Ovary (tissue), 10 donors: ENCODE measurements at regions of chr15 and their contacts with region 1.

Region 1: DNA sequence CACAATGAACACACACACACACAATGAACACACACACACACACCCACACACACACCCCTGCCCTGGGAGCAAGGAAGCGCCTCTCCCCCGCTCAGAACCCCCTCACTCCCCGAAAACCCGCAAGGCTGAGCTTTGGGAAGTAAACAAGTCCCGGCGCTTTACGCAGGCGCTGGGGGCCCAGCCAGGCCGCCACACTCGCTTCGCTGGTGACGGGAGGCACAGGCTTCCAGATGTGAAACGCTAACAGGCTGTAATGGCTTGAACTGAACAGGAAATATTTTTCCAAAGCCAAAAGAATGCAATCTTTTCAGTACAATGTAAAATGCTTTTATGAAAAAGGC is 122.7 kb upstream of the IGF1R start:
- DNase-seq: peak; percentile 57 to 81 (median 67)
- H3K4me3 ChIP-seq: no peak overlapping the region
- H3K27ac ChIP-seq: peak overlapping the region; percentile 49 to 75
- H3K4me1 ChIP-seq: peaks cover 4% of the 10 kb centered on the region
- H3K27me3 ChIP-seq: no peaks in the 10 kb centered on the region
- CTCF ChIP-seq: no peak
- EP300 ChIP-seq: no peak
- POLR2A ChIP-seq: no peak

Region 2: DNA sequence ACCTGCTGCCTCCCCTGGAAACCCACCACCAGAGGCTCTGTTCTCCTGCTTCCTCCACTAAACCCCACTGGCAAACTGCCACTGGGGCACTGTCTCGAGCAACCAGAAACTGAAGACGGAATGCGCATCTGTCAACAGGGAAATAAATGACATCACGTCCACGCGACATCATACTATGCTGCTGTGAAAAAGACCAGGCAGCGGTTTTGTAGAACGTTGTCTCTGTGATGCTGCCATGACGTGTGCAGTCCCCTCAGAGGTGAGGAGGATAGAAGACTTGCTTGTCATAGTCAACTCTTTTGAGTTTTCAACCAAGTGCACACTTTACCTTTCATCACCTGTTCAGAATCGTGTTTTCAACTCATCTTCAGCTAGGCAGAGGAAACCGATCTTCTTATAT is 80.3 kb before region 1 on chr15:
- intact Hi-C with region 1: no loop called
- DNase-seq: no peak
- H3K4me3 ChIP-seq: no peak overlapping the region
- H3K27ac ChIP-seq: no peak overlapping the region
- H3K4me1 ChIP-seq: no peaks in the 10 kb centered on the region
- H3K27me3 ChIP-seq: no peaks in the 10 kb centered on the region
- CTCF ChIP-seq: no peak
- EP300 ChIP-seq: no peak
- POLR2A ChIP-seq: no peak

Region 3: GRCh38 chr15:98548154-98548971 is 22.7 kb after region 1 on chr15:
- intact Hi-C with region 1: loop called in 1 of 4 experiments (anchors 2 kb)
- DNase-seq: peak; percentile 76 to 84 (median 80)
- H3K4me3 ChIP-seq: peak overlapping the region; percentile 52
- H3K27ac ChIP-seq: peak overlapping the region; percentile 83 to 92
- H3K4me1 ChIP-seq: no peaks in the 10 kb centered on the region
- H3K27me3 ChIP-seq: no peaks in the 10 kb centered on the region
- CTCF ChIP-seq: peak in 1 of 3 donors; percentile 8
- EP300 ChIP-seq: no peak
- POLR2A ChIP-seq: peak; percentile 31

Region 4: GRCh38 chr15:98881526-98882520 is 356.2 kb after region 1 on chr15:
- intact Hi-C with region 1: no loop called
- DNase-seq: peak in 2 of 5 donors; percentile 52 to 56
- H3K4me3 ChIP-seq: no peak overlapping the region
- H3K27ac ChIP-seq: no peak overlapping the region
- H3K4me1 ChIP-seq: peaks cover 13% of the 10 kb centered on the region
- H3K27me3 ChIP-seq: no peaks in the 10 kb centered on the region
- CTCF ChIP-seq: peak in 2 of 3 donors; percentile 41 to 62
- EP300 ChIP-seq: no peak
- POLR2A ChIP-seq: no peak